KBM-7 (cell line): ENCODE measurements at regions of chr17 and their contacts with region 1.

Region 1: GRCh38 chr17:28227316-28228125 is 91.5 kb upstream of the TMEM97 start:
- DNase-seq: no peak

Region 2: GRCh38 chr17:27793168-27793905 is 434.2 kb before region 1 on chr17:
- in situ Hi-C with region 1: loop called (anchors 25 kb)
- DNase-seq: no peak